Activated CD8-positive, alpha-beta memory T cell treated with anti-CD3 and anti-CD28 coated beads, Interleukin-2, amount 10 ng/mL, durations not matched to agents 7 days and 5 days (primary cell): ENCODE measurements at regions of chr2 and their contacts with region 1.

Region 1: GRCh38 chr2:38274286-38275276 is 102.5 kb downstream of the ATL2 start:
- DNase-seq: no peak
- ATAC-seq: no peak
- H3K4me3 Mint-ChIP-seq: no peak overlapping the region
- H3K27ac Mint-ChIP-seq: no peak overlapping the region
- H3K4me1 Mint-ChIP-seq: peaks cover 5% of the 10 kb centered on the region
- H3K27me3 Mint-ChIP-seq: peaks cover 2% of the 10 kb centered on the region

Region 2: DNA sequence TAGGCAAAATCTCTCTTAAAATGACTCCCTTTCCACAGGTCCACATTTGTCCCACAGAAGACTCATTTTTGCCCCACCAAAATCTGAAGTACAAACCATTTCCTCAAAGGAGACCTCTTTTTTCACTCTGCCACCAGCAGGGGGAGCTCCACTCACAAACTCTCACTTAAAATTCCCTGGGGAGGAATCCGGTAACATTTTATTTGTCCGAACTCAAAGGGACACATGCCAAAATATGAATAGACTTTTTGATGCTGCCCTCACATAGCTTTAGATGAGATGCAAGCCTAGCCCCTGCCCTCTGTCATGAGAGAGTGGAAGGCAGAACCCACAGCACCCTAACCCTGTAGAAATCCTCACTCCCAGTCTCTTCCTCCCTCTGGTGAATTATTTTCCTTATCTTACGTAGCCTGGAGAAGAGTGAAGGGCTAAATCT is 292.4 kb before region 1 on chr2:
- CTCF ChIA-PET with region 1: interaction called, 10 read pairs
- DNase-seq: peak; percentile 61
- ATAC-seq: no peak
- H3K4me3 Mint-ChIP-seq: no peak overlapping the region
- H3K27ac Mint-ChIP-seq: no peak overlapping the region
- H3K4me1 Mint-ChIP-seq: peaks cover 7% of the 10 kb centered on the region
- H3K27me3 Mint-ChIP-seq: peaks cover 14% of the 10 kb centered on the region

Region 3: DNA sequence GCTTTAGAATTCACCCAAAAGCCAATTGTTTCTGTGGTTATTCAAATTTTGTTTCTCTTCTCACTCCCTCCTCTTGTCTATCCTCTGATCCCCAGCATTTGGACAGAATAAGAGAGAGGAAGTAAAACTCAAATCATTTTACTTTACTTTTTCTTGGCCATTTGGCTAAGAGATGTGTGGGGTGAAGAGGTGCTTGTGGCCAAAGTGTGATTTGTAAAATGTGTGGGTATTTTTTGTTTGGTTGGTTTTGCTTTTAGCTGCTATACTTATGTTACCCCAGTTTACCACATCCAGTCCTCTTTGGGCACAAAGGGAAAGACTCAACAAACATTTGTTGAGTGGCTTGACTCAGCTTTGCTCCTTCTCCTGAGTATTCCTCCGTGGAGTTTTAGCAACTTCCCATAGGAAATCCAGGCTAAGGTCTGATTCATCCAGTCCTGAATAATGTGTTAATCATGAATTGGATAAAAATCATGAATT is 89.5 kb before region 1 on chr2:
- CTCF ChIA-PET with region 1: no interaction called
- DNase-seq: no peak
- ATAC-seq: peak; percentile 63
- H3K4me3 Mint-ChIP-seq: no peak overlapping the region
- H3K27ac Mint-ChIP-seq: peak overlapping the region; percentile 50
- H3K4me1 Mint-ChIP-seq: peaks cover 23% of the 10 kb centered on the region
- H3K27me3 Mint-ChIP-seq: peaks cover 35% of the 10 kb centered on the region